Activated CD4-positive, alpha-beta memory T cell treated with anti-CD3 and anti-CD28 coated beads, Interleukin-2, amount 10 ng/mL, durations not matched to agents 7 days and 5 days (primary cell): ENCODE measurements at regions of chr12 and their contacts with region 1.

Region 1: DNA sequence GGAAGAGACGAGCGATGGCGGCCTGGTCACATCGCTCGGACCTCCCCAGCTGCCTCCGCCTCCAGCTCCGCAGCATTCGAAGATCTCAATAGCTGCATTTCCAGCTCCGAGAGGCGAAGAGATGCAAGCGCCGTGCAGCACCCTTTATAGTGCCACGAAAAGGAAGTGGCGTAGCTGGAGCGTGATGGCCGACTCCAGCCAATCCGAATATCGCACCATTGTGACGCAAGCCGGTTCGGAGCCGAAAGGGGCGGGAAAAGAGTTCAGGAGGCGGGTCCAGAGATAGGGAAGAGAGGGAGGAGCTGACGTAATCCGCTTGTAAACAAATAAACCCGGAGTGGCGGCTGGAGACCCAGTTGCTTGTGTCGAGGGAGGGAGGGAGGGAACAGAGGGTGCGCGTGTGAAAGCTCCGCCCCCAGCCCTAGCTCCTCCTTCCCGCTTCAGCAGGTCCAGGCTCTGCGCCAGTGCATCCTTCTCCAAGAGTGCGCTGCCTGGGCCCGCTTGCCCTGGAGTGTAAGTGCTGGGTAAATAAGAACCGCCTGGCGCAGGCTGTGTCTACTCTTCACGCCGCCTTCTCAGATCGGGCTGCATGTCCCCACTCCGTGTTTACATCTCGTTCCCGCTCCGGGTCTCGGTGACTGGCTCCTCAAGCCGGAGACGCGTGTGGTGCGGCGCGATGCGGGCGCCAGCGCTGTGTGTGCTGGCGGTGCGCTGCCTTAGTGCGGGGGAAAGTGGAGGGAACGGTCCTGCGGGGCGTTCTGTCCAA is at the start of gene BTG1:
- DNase-seq: peak; percentile 100
- H3K4me3 Mint-ChIP-seq: peak within 1 kb of the TSS; percentile 99
- H3K27ac Mint-ChIP-seq: peak within 1 kb of the TSS; percentile 98
- H3K4me1 Mint-ChIP-seq: peaks cover 27% of the 10 kb centered on the region
- H3K27me3 Mint-ChIP-seq: no peaks in the 10 kb centered on the region
- total RNA-seq, gene BTG1: 217 to 227 TPM

Region 2: GRCh38 chr12:91577586-91578539 is 568.1 kb before region 1 on chr12:
- CTCF ChIA-PET with region 1: no interaction called
- POLR2A ChIA-PET with region 1: interaction called, 13 read pairs
- DNase-seq: no peak
- H3K4me3 Mint-ChIP-seq: peak overlapping the region; percentile 70
- H3K27ac Mint-ChIP-seq: no peak overlapping the region
- H3K4me1 Mint-ChIP-seq: peaks cover 9% of the 10 kb centered on the region
- H3K27me3 Mint-ChIP-seq: no peaks in the 10 kb centered on the region

Region 3: DNA sequence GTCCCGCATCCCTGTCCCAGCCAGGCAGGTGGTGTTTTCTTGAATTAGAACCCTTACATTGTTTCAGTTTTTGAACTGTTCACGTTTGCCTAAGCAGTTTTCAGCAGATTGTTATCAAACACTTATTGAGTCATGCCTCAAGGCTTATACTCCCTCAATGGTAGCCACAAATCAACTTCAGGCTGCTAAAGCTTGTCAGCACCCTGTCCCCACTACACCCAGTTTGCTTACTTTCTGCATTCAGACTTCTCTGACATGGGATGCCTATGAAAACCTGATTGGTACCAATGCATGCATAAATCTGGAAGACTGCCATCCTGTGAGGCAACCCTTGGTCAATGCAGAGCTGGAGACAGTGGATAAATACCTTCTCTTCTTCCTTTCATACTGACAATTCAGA is 225.6 kb before region 1 on chr12:
- CTCF ChIA-PET with region 1: no interaction called
- POLR2A ChIA-PET with region 1: no interaction called
- DNase-seq: no peak
- H3K4me3 Mint-ChIP-seq: no peak overlapping the region
- H3K27ac Mint-ChIP-seq: no peak overlapping the region
- H3K4me1 Mint-ChIP-seq: peaks cover 15% of the 10 kb centered on the region
- H3K27me3 Mint-ChIP-seq: no peaks in the 10 kb centered on the region

Region 4: GRCh38 chr12:91985002-91985787 is 160.7 kb before region 1 on chr12:
- CTCF ChIA-PET with region 1: interaction called, 5 read pairs
- POLR2A ChIA-PET with region 1: interaction called, 11 read pairs
- DNase-seq: no peak
- H3K4me3 Mint-ChIP-seq: no peak overlapping the region
- H3K27ac Mint-ChIP-seq: no peak overlapping the region
- H3K4me1 Mint-ChIP-seq: peaks cover 7% of the 10 kb centered on the region
- H3K27me3 Mint-ChIP-seq: no peaks in the 10 kb centered on the region

Region 5: GRCh38 chr12:92041742-92042141 is 104.2 kb before region 1 on chr12:
- CTCF ChIA-PET with region 1: no interaction called
- POLR2A ChIA-PET with region 1: interaction called, 33 read pairs
- DNase-seq: peak; percentile 31
- H3K4me3 Mint-ChIP-seq: no peak overlapping the region
- H3K27ac Mint-ChIP-seq: peak overlapping the region; percentile 67
- H3K4me1 Mint-ChIP-seq: peaks cover 45% of the 10 kb centered on the region
- H3K27me3 Mint-ChIP-seq: no peaks in the 10 kb centered on the region

Region 6: GRCh38 chr12:92070864-92071445 is 75.0 kb before region 1 on chr12:
- CTCF ChIA-PET with region 1: no interaction called
- POLR2A ChIA-PET with region 1: no interaction called
- DNase-seq: no peak
- H3K4me3 Mint-ChIP-seq: no peak overlapping the region
- H3K27ac Mint-ChIP-seq: no peak overlapping the region
- H3K4me1 Mint-ChIP-seq: peaks cover 2% of the 10 kb centered on the region
- H3K27me3 Mint-ChIP-seq: no peaks in the 10 kb centered on the region

Region 7: DNA sequence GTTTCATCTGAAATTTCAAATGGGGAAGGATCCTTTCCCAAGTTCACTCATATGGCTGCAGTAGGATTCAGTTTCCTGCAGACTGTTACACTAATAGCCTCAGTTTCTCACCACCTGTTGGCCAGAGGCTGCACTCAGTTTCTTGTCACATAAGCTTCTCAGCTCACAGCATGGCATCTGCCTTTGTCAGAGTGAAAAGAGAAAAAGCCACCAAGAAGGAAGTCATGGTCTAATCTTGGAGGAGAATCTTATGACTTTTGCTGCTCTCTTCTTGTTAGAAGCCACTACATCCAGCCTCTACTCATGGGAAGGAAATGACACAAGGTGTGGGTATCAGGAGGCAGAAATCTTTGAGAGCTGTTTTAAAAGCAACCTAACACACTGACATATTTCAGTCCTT is 39.1 kb after region 1 on chr12:
- CTCF ChIA-PET with region 1: no interaction called
- POLR2A ChIA-PET with region 1: interaction called, 44 read pairs
- DNase-seq: peak; percentile 52
- H3K4me3 Mint-ChIP-seq: peak overlapping the region; percentile 46
- H3K27ac Mint-ChIP-seq: peak overlapping the region; percentile 84
- H3K4me1 Mint-ChIP-seq: peaks cover 47% of the 10 kb centered on the region
- H3K27me3 Mint-ChIP-seq: no peaks in the 10 kb centered on the region

Region 8: DNA sequence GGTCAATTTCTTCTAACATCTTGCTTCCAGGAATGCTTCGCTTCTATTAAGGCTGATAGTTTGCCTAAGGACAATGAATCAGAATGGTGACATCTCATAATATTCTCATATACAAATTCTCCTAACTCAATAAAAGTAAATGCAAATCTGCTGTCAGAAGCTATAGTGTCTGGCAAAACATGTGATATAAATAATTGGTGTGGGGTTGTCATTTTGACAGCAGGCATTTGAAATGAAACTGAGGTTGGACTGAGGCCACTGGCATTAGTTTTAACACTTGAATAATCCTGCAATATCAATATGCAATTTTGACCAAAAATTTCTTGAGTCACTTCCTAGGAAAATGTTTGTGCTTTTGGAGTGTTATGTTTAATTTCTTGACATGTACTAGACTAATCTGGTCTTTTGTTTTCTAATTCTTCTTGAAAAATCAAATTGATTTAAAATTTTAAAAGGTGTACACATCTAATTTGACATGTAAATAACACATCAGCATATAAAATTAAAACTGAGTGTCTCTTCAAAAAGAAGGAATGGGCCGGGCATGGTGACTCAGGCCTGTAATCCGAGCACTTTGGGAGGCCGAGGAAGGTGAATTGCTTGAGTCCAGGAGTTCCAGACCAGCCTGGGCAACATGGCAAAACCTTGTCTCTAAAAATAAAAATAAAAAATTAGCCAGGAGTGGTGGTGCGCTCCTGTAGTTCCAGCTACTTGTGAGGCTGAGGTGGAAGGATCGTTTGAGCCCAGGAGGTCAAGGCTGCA is 92.0 kb after region 1 on chr12:
- CTCF ChIA-PET with region 1: no interaction called
- POLR2A ChIA-PET with region 1: no interaction called
- DNase-seq: no peak
- H3K4me3 Mint-ChIP-seq: no peak overlapping the region
- H3K27ac Mint-ChIP-seq: no peak overlapping the region
- H3K4me1 Mint-ChIP-seq: no peaks in the 10 kb centered on the region
- H3K27me3 Mint-ChIP-seq: no peaks in the 10 kb centered on the region

Region 9: DNA sequence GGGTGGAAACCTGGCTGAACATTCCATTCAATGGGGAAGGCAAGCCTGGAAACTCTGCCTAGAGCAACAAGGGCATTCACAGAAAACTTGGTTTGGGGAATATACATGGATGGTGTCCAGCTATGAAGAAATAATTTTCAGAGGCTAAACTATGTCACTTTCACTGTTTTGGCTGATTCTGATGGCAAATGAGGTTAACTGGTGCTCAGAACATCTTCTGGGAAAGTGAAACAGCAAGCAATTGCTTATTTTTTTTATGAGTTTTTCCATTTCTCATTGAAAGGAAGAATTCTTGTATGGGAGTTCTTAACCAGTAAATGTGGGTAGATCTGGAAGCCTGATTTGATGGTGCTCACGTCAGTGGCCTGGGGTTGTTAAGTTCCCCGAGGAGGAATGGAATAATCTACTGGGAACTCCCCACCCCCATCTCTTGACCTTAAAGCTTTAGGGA is 132.5 kb after region 1 on chr12:
- CTCF ChIA-PET with region 1: no interaction called
- POLR2A ChIA-PET with region 1: no interaction called
- DNase-seq: no peak
- H3K4me3 Mint-ChIP-seq: no peak overlapping the region
- H3K27ac Mint-ChIP-seq: no peak overlapping the region
- H3K4me1 Mint-ChIP-seq: peaks cover 3% of the 10 kb centered on the region
- H3K27me3 Mint-ChIP-seq: no peaks in the 10 kb centered on the region

Region 10: GRCh38 chr12:92363295-92364146 is 217.6 kb after region 1 on chr12:
- CTCF ChIA-PET with region 1: interaction called, 13 read pairs
- POLR2A ChIA-PET with region 1: interaction called, 51 read pairs
- DNase-seq: peak; percentile 40
- H3K4me3 Mint-ChIP-seq: peak overlapping the region; percentile 51
- H3K27ac Mint-ChIP-seq: peak overlapping the region; percentile 70
- H3K4me1 Mint-ChIP-seq: peaks cover 47% of the 10 kb centered on the region
- H3K27me3 Mint-ChIP-seq: no peaks in the 10 kb centered on the region

Region 11: GRCh38 chr12:92551853-92552397 is 406.0 kb after region 1 on chr12:
- CTCF ChIA-PET with region 1: interaction called, 4 read pairs
- POLR2A ChIA-PET with region 1: interaction called, 40 read pairs
- DNase-seq: no peak
- H3K4me3 Mint-ChIP-seq: no peak overlapping the region
- H3K27ac Mint-ChIP-seq: no peak overlapping the region
- H3K4me1 Mint-ChIP-seq: peaks cover 26% of the 10 kb centered on the region
- H3K27me3 Mint-ChIP-seq: no peaks in the 10 kb centered on the region